ENCODE measurements at regions of chr13 and their contacts with region 1.

Region 1: DNA sequence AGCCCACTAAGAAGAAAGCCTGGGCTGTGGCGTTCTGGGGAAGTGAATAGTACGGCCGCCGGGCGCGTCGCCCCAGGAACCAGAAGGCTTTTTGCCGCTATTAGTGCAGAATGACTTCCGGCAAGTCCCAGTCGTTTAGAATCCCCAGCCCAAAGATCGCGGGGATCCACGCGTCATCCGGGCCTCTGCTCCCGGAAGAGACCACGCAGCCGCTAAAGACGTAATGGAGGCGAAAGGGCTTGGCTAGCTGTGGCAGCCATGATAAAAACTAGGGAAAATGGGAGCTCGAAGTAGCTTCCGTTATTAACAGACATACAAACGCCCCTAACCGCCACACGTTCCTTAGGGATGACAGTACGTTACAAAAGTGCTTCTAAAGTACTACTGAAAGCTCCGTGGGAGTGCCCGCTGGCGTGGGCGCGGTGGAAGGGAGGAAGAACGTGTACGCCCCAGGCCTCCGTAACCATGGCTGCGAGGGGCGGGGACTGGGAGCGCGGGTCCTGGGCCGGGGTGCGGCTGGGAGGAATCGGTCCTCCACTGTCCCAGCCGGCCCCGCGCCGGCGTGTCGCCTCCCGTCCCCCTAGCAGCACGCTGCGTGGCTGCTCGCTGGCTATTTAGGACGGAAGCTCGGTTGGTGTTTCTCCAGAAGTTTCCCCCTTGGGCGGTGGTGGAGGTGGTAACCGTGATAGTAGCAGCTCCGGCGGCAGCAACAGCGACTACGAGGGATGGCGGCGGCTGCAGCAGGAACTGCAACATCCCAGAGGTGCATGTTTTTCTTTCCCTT is at the start of gene SUGT1:
- DNase-seq: peak; percentile 98
- H3K4me3 ChIP-seq: peak within 1 kb of the TSS; percentile 72 to 87 (median 81)
- H3K27ac ChIP-seq: peak within 1 kb of the TSS; percentile 94 to 96 (median 95)
- H3K4me1 ChIP-seq: peaks cover 27 to 50% (median 47%) of the 10 kb centered on the region in 4 donors
- H3K27me3 ChIP-seq: no peaks in the 10 kb centered on the region
- CTCF ChIP-seq: peak; percentile 51 to 80 (median 57)
- EP300 ChIP-seq: no peak
- POLR2A ChIP-seq: peak; percentile 16
- total RNA-seq, gene SUGT1: 28.3 to 41.7 (median 33.3) TPM

Region 2: GRCh38 chr13:52450012-52450792 is 202.2 kb before region 1 on chr13 and contains the start of gene VPS36:
- intact Hi-C with region 1: loop called (anchors 10 kb)
- DNase-seq: peak; percentile 98
- H3K4me3 ChIP-seq: peak within 1 kb of the TSS; percentile 81 to 97 (median 91)
- H3K27ac ChIP-seq: peak within 1 kb of the TSS; percentile 89 to 95 (median 94)
- H3K4me1 ChIP-seq: peaks cover 28 to 42% (median 38%) of the 10 kb centered on the region in 4 donors
- H3K27me3 ChIP-seq: no peaks in the 10 kb centered on the region
- CTCF ChIP-seq: peak in 2 of 3 experiments; percentile 99
- EP300 ChIP-seq: no peak
- POLR2A ChIP-seq: peak; percentile 89
- total RNA-seq, gene VPS36: 29.5 to 34.0 (median 33.1) TPM

Region 3: DNA sequence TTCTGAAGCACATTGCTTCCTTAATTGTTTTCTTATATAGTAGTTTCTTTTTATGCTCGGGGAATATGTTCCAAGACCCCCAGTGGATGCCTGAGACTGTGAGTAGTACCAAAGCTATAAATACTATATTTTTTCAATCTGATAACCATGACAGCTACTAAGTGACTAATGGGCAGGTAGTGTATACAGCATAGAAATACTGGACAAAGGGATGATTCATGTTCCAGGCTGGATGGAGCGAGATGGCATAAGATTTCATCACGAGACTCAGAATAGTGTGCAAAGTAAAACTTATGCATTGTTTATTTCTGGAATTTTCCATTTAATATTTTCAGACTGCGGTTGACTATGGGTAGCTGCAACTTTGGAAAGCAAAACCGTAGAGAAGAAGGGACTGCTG is 328.3 kb after region 1 on chr13:
- intact Hi-C with region 1: no loop called
- DNase-seq: no peak
- H3K4me3 ChIP-seq: no peak overlapping the region
- H3K27ac ChIP-seq: no peak overlapping the region
- H3K4me1 ChIP-seq: no peaks in the 10 kb centered on the region
- H3K27me3 ChIP-seq: peaks cover 0 to 11% (median 0%) of the 10 kb centered on the region in 4 donors
- CTCF ChIP-seq: no peak
- EP300 ChIP-seq: no peak
- POLR2A ChIP-seq: no peak